ENCODE measurements at regions of chr14 and their contacts with region 1.

Region 1: DNA sequence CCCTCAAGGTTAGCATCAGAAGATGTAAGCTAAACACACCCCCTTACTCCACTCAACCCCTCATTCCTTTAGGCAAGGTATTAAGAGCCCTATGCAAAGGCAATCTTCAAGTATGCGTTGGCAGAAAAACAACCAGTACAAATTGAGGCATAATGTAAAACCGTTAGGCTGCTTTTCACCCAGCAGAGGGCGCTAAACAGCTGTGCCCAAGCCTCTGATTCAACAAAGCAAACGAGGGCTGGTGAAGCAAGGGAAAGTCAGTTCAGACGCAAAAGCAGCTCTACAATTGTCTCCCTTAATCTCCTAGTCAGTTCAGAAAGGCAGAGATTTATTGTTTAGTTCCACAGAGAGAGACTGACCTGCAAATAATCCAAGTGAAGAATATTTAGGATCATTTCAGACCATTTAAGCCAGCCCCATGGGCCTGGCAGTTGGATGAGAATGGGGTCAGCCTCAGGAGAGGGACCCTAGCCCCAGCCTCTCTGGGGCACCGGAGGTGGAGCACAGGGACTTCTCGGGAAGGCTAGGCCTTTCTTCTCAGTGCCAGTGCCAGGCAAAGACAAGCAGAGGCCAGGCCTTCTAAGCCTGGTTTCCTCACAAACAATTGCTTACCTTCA is 23.5 kb downstream of the DCAF5 start:
- DNase-seq: peak; percentile 67
- H3K4me3 ChIP-seq: no peak overlapping the region
- H3K27ac ChIP-seq: peak overlapping the region; percentile 39
- H3K4me1 ChIP-seq: peaks cover 25% of the 10 kb centered on the region
- H3K27me3 ChIP-seq: no peaks in the 10 kb centered on the region
- CTCF ChIP-seq: peak; percentile 95 to 99

Region 2: GRCh38 chr14:68987653-68988036 is 141.7 kb before region 1 on chr14:
- CTCF ChIA-PET with region 1: no interaction called
- dilution Hi-C with region 1: no loop called
- in situ Hi-C with region 1: no loop called
- intact Hi-C with region 1: no loop called
- DNase-seq: no peak
- H3K4me3 ChIP-seq: no peak overlapping the region
- H3K27ac ChIP-seq: no peak overlapping the region
- H3K4me1 ChIP-seq: peaks cover 12% of the 10 kb centered on the region
- H3K27me3 ChIP-seq: no peaks in the 10 kb centered on the region
- CTCF ChIP-seq: no peak

Region 3: DNA sequence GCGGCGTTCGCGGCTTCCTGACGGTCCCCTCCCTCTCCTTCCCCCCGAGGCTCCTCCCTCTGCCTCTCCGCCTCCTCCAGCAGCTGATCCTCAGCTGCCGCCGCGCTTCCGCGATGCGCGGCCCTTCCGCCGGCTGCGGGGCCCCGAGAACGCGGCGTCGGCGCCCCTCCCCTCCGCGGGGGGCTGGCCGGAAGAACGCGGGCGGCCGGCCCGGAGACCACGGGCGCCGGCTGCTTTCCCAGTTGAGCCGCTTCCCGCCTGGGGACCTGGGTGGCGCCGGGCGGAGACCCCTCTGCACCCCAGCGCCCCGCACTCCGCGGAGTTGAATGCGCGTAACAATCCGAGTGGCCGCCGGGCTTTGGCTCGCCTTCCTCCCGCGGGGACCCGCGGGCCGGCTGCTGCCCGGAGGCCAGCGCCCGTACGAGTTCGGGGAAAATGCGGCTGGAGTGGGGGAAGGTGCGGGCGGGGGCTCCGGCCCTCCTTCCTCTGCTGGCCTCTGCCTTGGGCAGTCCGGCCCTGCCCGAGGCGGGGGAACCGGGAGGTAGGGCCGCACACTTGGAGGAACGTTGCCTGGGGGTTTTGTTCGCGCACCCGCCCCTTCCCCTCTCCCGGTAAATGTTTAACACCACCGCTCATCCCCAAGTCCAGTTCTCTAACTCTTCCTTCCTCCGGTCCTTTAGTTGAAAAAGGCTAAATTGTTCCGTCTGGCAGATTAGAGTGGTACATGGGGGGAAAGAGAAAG is 23.9 kb after region 1 on chr14:
- CTCF ChIA-PET with region 1: interaction called, 4 read pairs
- dilution Hi-C with region 1: no loop called
- in situ Hi-C with region 1: no loop called
- intact Hi-C with region 1: loop called (anchors 1 kb)
- DNase-seq: peak; percentile 92
- H3K4me3 ChIP-seq: peak overlapping the region; percentile 59 to 92 (median 83)
- H3K27ac ChIP-seq: peak overlapping the region; percentile 47
- H3K4me1 ChIP-seq: peaks cover 30% of the 10 kb centered on the region
- H3K27me3 ChIP-seq: no peaks in the 10 kb centered on the region
- CTCF ChIP-seq: no peak

Region 4: GRCh38 chr14:69191340-69192111 is 62.2 kb after region 1 on chr14 and contains the start of gene EXD2:
- CTCF ChIA-PET with region 1: interaction called, 4 read pairs
- dilution Hi-C with region 1: no loop called
- in situ Hi-C with region 1: no loop called
- intact Hi-C with region 1: loop called (anchors 1 kb)
- DNase-seq: peak; percentile 92
- H3K4me3 ChIP-seq: peak within 1 kb of the TSS; percentile 76 to 98 (median 86)
- H3K27ac ChIP-seq: peak within 1 kb of the TSS; percentile 71
- H3K4me1 ChIP-seq: peaks cover 4% of the 10 kb centered on the region
- H3K27me3 ChIP-seq: no peaks in the 10 kb centered on the region
- CTCF ChIP-seq: no peak
- total RNA-seq, gene EXD2: 28.8 to 30.2 TPM

Region 5: GRCh38 chr14:69232388-69232787 is 103.0 kb after region 1 on chr14:
- CTCF ChIA-PET with region 1: no interaction called
- dilution Hi-C with region 1: no loop called
- in situ Hi-C with region 1: no loop called
- intact Hi-C with region 1: loop called (anchors 2 kb)
- DNase-seq: no peak
- H3K4me3 ChIP-seq: no peak overlapping the region
- H3K27ac ChIP-seq: no peak overlapping the region
- H3K4me1 ChIP-seq: no peaks in the 10 kb centered on the region
- H3K27me3 ChIP-seq: no peaks in the 10 kb centered on the region
- CTCF ChIP-seq: no peak

Region 6: DNA sequence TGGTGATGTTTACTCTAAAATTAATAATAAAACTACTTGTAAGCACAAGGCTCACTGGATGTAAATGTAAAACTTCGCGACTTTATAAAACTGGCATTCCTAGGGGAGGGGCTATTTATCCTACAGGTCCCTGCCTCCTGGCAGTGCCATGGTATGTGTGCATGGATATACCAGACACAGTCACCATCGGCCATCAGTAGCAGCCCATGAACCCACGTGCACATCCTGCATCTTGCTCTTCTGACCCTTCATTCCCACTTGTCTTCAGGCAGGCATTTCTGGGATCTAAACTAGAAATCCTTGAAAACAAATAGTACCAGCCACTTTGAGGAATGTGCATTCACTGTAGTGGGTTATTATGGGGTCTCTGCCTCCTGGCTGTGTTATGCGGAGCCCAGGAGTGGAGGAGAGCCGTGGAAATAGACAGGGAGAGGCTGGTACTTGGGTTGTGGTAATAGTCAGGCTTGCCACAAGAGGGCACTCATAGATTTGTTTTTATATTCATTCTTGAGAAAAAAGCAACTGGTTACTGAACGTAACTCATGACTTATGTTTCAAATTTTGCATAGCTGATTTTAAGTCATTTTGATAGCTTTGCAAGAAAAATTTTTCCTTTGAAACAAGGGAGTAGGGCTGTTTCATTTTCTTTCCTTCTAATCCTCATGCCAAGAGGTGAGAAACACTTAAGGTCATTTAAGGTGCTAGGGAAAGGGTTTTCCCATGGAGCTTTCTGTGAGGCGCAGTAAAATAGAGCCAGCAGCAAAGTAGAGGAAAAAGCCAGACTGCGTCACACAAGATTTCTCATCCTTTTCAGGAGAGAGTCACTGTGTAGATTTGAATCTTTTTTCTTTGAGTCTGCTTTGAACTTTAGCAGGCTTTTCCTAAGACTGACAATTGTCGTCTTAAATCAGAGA is 113.2 kb after region 1 on chr14:
- CTCF ChIA-PET with region 1: no interaction called
- dilution Hi-C with region 1: no loop called
- in situ Hi-C with region 1: no loop called
- intact Hi-C with region 1: loop called (anchors 1 kb)
- DNase-seq: peak; percentile 32
- H3K4me3 ChIP-seq: no peak overlapping the region
- H3K27ac ChIP-seq: no peak overlapping the region
- H3K4me1 ChIP-seq: no peaks in the 10 kb centered on the region
- H3K27me3 ChIP-seq: no peaks in the 10 kb centered on the region
- CTCF ChIP-seq: peak; percentile 62 to 66

Region 7: DNA sequence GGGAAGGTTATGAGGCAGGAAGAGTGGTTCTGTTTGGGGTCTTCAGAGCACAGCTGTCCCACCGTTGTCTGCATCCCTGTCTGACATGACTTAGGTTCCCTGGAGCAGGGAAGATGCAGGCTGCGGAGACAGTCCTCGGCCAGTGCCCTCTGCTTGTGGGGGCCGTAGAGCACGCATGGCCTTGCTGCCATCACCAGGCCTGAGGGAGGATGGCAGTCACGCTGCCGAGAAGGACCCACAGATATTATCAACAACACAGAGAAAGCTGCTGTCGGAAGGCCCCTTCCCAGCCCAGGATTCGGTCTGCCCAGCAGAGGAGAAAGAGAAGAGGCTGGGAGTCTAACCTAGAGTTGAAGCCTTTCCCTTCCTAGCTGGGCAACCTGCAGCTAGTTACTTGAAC is 233.7 kb after region 1 on chr14:
- CTCF ChIA-PET with region 1: no interaction called
- dilution Hi-C with region 1: no loop called
- in situ Hi-C with region 1: no loop called
- intact Hi-C with region 1: loop called (anchors 1 kb)
- DNase-seq: no peak
- H3K4me3 ChIP-seq: no peak overlapping the region
- H3K27ac ChIP-seq: no peak overlapping the region
- H3K4me1 ChIP-seq: no peaks in the 10 kb centered on the region
- H3K27me3 ChIP-seq: no peaks in the 10 kb centered on the region
- CTCF ChIP-seq: no peak

Measured in mammary epithelial cell (primary cell).